ENCODE measurements at regions of chr5 and their contacts with region 1.

Region 1: GRCh38 chr5:32613050-32613672 is 27.8 kb downstream of the SUB1 start:
- DNase-seq: peak; percentile 80 to 88 (median 83)
- ATAC-seq: peak; percentile 89
- H3K4me3 ChIP-seq: no peak overlapping the region
- H3K27ac ChIP-seq: no peak overlapping the region
- H3K4me1 ChIP-seq: no peaks in the 10 kb centered on the region
- H3K27me3 ChIP-seq: no peaks in the 10 kb centered on the region; a peak in 1 of 5 replicates
- CTCF ChIP-seq: peak; percentile 91 to 97 (median 93)
- EP300 ChIP-seq: no peak
- POLR2A ChIP-seq: no peak
- RAD21 ChIP-seq: peak; percentile 94 to 95

Region 2: GRCh38 chr5:31809050-31809870 is 803.9 kb before region 1 on chr5:
- CTCF ChIA-PET with region 1: no interaction called
- POLR2A ChIA-PET with region 1: no interaction called
- in situ Hi-C with region 1: loop called (anchors 10 kb)
- intact Hi-C with region 1: no loop called
- DNase-seq: peak; percentile 39 to 76 (median 57)
- ATAC-seq: peak; percentile 98
- H3K4me3 ChIP-seq: no peak overlapping the region
- H3K27ac ChIP-seq: no peak overlapping the region
- H3K4me1 ChIP-seq: no peaks in the 10 kb centered on the region
- H3K27me3 ChIP-seq: peaks cover 7 to 25% of the 10 kb centered on the region in 2 experiments; a peak in 3 of 5 replicates
- CTCF ChIP-seq: peak; percentile 74 to 98 (median 96)
- EP300 ChIP-seq: no peak
- POLR2A ChIP-seq: no peak
- RAD21 ChIP-seq: peak; percentile 76 to 87

Region 3: DNA sequence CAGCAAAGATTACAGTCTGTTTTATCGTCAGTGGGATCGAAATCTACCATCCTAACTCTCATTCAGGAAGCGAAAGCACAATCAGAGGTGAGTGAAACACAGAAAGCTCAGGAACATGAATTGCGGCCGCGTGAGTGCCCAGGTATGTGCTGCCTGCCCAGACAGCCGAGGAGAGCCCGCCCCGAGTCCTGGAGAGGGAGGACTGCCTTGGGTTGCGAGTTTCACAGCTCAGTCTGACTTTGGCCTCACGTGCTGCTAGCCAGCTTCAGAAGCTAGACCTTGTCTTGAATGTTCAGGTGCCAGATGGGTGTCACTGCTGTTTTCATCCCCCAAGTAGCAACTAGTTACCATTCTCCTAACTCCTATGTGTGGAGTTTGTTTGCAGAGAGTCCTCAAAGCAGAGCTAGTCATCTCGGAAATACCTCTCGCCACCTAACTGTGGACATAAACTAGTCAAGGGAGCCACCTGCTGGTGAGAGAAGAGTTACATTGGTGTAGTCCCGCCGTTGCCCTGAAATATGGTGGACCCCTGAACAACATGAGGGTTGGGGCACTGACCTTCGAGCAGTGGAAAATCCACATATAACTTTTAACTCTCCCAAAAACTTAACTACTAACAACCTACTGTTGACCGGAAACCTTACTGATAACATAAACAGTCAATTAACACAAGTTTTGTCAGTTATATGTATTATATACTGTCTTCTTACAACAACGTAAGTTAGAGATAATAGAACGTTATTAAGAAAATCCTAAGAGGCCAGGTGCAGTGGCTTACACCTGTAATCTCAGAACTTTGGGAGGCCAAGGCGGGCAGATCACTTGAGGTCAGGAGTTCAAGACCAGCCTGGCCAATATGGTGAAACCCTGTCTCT is 520.0 kb before region 1 on chr5:
- CTCF ChIA-PET with region 1: no interaction called
- POLR2A ChIA-PET with region 1: no interaction called
- in situ Hi-C with region 1: no loop called
- intact Hi-C with region 1: loop called (anchors 10 kb)
- DNase-seq: peak; percentile 80 to 89 (median 82)
- ATAC-seq: peak; percentile 95
- H3K4me3 ChIP-seq: no peak overlapping the region
- H3K27ac ChIP-seq: no peak overlapping the region
- H3K4me1 ChIP-seq: peaks cover 0 to 12% of the 10 kb centered on the region in 2 experiments; a peak in 2 of 5 replicates
- H3K27me3 ChIP-seq: peaks cover 12 to 26% of the 10 kb centered on the region in 2 experiments; a peak in 4 of 5 replicates
- CTCF ChIP-seq: peak; percentile 87 to 92 (median 90)
- EP300 ChIP-seq: no peak
- POLR2A ChIP-seq: no peak
- RAD21 ChIP-seq: peak; percentile 44 to 85

Region 4: DNA sequence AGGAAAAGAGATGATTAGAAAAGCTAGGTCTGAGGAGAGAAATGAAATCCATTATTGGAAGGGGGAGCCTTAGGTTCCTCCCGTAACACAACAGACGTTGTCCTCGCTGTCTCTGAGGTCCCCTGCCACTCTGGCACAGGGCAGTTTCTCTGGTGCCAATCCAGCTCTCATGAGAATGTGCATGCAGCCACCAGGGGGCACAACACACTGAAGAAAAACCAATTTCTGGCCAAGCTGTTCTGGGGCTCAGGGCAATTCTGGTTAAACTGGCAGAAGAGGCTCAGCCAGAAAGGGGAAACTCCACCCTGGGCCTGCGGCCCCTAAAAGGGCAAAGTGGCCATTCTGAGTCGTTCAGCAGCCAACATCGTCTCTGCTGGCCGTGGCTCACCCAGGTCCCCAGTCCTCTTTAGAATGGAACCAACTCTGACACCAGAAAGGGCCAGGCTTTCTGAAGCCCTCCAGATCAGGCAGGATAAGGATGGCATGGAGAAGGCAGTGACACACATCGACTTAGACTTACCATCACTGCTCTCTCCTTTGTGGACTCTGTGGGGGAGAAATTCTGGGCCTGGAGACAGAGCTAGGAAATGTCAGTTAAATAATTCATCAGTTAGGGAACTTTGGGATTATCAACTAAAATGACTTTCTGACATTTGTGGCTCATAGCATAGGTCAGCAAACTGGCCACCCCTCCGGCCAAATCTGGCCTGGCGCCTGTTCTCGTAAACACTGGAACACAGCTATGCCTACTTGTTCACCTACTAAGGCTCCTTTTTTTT is 380.5 kb before region 1 on chr5:
- CTCF ChIA-PET with region 1: interaction called, 14 read pairs
- POLR2A ChIA-PET with region 1: no interaction called
- in situ Hi-C with region 1: loop called (anchors 10 kb)
- intact Hi-C with region 1: loop called (anchors 2 kb)
- DNase-seq: peak; percentile 48 to 71 (median 56)
- ATAC-seq: peak; percentile 90
- H3K4me3 ChIP-seq: no peak overlapping the region
- H3K27ac ChIP-seq: no peak overlapping the region
- H3K4me1 ChIP-seq: peaks cover 0 to 4% of the 10 kb centered on the region in 2 experiments; a peak in 1 of 5 replicates
- H3K27me3 ChIP-seq: no peaks in the 10 kb centered on the region
- CTCF ChIP-seq: peak; percentile 78 to 92 (median 81)
- EP300 ChIP-seq: no peak
- POLR2A ChIP-seq: no peak
- RAD21 ChIP-seq: peak; percentile 80 to 90

Region 5: DNA sequence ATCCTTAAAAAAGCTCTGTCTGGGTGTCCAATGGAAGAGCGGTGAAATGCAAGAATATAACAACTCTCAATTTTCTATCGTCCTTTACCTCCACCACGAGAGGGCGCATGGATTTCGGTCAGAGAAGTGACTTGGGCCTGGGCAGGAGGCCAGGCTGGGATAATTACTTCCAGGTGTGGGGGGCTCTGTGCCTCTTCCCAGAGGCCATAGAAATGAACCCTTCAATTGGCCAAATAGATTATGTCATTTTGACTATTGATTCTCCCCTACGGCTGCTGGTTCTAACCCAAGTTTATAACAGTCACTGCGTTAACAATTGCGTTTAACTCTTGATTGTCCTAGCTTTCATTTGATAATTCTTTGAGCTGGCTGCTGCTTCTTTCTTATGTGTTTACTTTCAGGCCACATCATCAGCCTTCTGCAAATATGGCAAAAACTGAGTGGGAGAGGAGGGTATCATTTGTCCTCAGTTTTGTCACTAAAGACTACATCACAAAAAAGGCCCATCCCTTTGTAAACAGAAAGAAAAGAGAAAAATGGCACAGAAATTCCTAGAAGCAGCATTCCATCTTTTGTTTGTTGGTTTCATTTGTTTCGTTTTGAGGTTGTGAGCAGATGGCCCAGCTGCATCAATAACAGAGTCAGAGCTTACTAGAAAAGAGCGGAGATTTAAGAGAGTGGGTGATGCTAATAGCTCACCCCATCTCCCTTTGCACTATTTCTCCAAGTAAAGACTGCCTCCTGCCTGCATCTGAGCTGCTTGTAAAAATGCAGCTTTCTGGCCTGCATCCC is 123.2 kb before region 1 on chr5:
- CTCF ChIA-PET with region 1: interaction called, 24 read pairs
- POLR2A ChIA-PET with region 1: interaction called, 3 read pairs
- in situ Hi-C with region 1: loop called (anchors 5 kb)
- intact Hi-C with region 1: loop called (anchors 1 kb)
- DNase-seq: peak; percentile 69 to 84 (median 76)
- ATAC-seq: peak; percentile 90
- H3K4me3 ChIP-seq: no peak overlapping the region
- H3K27ac ChIP-seq: no peak overlapping the region
- H3K4me1 ChIP-seq: no peaks in the 10 kb centered on the region
- H3K27me3 ChIP-seq: peaks cover 6 to 26% of the 10 kb centered on the region in 2 experiments
- CTCF ChIP-seq: peak; percentile 82 to 87 (median 83)
- EP300 ChIP-seq: no peak
- POLR2A ChIP-seq: no peak
- RAD21 ChIP-seq: peak; percentile 88 to 91

Region 6: DNA sequence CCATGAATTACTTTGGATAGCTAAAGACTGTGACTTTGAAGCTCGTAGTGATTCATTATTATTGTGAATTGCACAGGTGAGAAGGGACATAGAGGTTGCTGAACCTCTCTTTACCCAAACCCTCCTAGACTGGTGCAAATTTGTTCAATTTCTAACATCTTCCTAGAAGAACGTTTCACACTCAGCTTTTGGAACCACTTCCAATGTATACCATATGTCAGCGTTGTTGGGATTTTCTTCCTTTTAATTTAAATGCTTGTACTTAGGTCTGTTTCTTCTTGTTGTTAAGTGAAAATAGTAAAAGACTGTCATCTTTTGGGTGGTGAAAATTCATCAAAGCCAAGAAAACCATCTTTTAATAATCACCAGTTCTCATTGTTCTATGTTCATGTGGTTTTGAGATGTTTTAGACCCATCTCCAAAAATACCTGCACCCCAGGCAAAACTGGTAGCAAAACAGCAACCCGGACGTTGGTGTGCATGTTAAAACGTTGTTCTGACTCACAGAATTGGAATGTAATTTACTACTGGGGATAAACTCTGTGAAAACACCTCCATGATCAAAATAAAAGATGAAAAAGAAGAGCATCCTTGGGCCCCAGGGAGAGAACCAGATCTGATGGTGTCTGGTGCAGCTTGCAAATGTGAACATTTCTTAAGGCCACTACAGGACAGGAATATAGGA is 336.3 kb after region 1 on chr5:
- CTCF ChIA-PET with region 1: no interaction called
- POLR2A ChIA-PET with region 1: no interaction called
- in situ Hi-C with region 1: no loop called
- intact Hi-C with region 1: no loop called
- DNase-seq: no peak
- ATAC-seq: no peak
- H3K4me3 ChIP-seq: no peak overlapping the region
- H3K27ac ChIP-seq: no peak overlapping the region
- H3K4me1 ChIP-seq: no peaks in the 10 kb centered on the region
- H3K27me3 ChIP-seq: no peaks in the 10 kb centered on the region
- CTCF ChIP-seq: no peak
- EP300 ChIP-seq: no peak
- POLR2A ChIP-seq: no peak
- RAD21 ChIP-seq: no peak